A549 (cell line): ENCODE measurements at regions of chr2 and their contacts with region 1.

Region 1: GRCh38 chr2:195656859-195657633 is at the start of gene SLC39A10:
- DNase-seq: peak; percentile 77 to 98
- ATAC-seq: peak; percentile 85 to 88
- H3K4me3 ChIP-seq: peak within 1 kb of the TSS; percentile 95
- H3K27ac ChIP-seq: peak within 1 kb of the TSS; percentile 99
- H3K4me1 ChIP-seq: peaks cover 33% of the 10 kb centered on the region
- CTCF ChIP-seq: no peak
- EP300 ChIP-seq: no peak
- POLR2A ChIP-seq: peak; percentile 79
- RAD21 ChIP-seq: peak in 1 of 2 experiments; percentile 19; a peak in 2 of 5 replicates
- polyA plus RNA-seq, gene SLC39A10: 34.2 and 42.6 TPM in 2 replicates

Region 2: DNA sequence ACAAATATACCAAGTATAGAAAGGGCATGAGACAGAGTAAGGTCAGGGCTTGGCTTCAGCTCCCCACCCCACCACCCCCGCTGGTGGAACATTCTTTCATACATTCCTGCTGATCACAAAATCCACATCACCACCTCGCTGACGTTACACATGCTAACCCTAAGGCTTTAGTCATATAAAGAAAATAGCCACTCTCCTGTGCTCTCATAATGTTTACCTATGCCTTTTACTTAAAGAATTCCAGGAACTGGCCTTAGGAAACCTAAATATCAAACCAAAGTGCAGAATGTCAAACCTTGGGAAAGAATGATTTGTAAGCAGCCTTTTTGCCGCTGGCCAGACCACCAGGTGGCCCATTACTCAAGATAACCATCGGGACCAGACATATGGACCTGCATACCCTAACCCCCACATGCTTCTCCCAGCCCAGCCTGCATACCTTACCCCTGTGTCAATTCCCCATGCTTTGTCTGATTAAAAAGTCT is 136.3 kb before region 1 on chr2:
- CTCF ChIA-PET with region 1: interaction called, 16 read pairs
- POLR2A ChIA-PET with region 1: interaction called, 14 read pairs
- DNase-seq: peak; percentile 90 to 97
- ATAC-seq: peak; percentile 98 to 100
- H3K4me3 ChIP-seq: no peak overlapping the region
- H3K27ac ChIP-seq: peak overlapping the region; percentile 81 to 91
- H3K4me1 ChIP-seq: peaks cover 25% of the 10 kb centered on the region
- CTCF ChIP-seq: peak; percentile 41
- EP300 ChIP-seq: peak; percentile 91 to 96
- POLR2A ChIP-seq: no peak
- RAD21 ChIP-seq: peak; percentile 63 to 77

Region 3: GRCh38 chr2:195561203-195562032 is 95.6 kb before region 1 on chr2:
- CTCF ChIA-PET with region 1: interaction called, 7 read pairs
- POLR2A ChIA-PET with region 1: interaction called, 33 read pairs
- DNase-seq: peak; percentile 36 to 75
- ATAC-seq: peak; percentile 73 to 76
- H3K4me3 ChIP-seq: no peak overlapping the region
- H3K27ac ChIP-seq: peak overlapping the region; percentile 77 to 92
- H3K4me1 ChIP-seq: peaks cover 68% of the 10 kb centered on the region
- CTCF ChIP-seq: no peak
- EP300 ChIP-seq: no peak
- POLR2A ChIP-seq: no peak
- RAD21 ChIP-seq: no peak

Region 4: DNA sequence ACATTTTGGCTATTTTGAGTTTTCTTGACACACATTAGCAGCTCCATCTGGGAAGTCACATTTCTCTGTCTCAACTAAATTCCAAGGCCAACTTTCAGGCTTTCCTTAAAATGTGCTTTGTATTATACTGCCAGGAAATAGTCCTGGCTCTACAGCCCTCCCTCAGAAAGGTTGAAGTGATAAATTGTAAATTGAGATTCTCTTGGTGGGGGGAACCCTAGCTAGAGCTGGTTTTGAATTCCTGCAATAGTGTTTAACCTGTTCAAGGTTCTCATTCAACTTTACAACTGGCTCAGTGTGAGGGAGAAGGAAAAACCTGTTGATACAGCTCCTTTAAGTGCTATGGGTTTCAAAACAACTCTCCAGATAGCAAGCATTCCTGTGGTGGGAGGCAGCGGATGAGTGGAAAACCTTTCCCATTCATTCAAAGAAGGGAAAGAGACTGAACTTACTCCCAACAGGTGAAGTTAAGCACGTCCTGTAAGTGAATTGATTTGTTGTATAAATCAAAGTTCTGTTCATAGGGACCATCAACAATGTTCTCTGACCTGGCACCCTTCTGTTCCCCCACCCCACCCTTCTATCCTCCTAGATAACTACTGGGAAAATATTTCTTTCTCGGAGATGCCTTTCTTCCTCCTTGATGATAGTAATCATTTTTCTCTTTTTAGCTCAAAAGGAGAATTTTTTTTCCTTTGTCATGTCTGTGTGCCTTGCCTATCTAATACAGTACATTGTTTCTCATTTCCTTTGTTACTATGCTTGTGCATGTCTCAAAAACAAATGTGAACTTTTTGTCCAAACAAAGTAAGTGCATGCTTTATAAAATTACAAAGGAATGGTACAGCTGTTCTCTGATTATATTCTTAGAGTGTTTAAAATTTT is 44.2 kb before region 1 on chr2:
- CTCF ChIA-PET with region 1: interaction called, 4 read pairs
- POLR2A ChIA-PET with region 1: interaction called, 41 read pairs
- DNase-seq: peak; percentile 41 to 61
- ATAC-seq: peak; percentile 80 to 86
- H3K4me3 ChIP-seq: peak overlapping the region; percentile 23; the same call in 2 of the 3 replicates
- H3K27ac ChIP-seq: peak overlapping the region; percentile 68 to 87
- H3K4me1 ChIP-seq: peaks cover 48% of the 10 kb centered on the region
- CTCF ChIP-seq: no peak
- EP300 ChIP-seq: no peak
- POLR2A ChIP-seq: no peak
- RAD21 ChIP-seq: no peak